MCF 10A (cell line): ENCODE measurements at regions of chr3 and their contacts with region 1.

Region 1: GRCh38 chr3:129249276-129250065 is at the start of gene COPG1:
- DNase-seq: peak; percentile 89
- H3K4me3 Mint-ChIP-seq: peak within 1 kb of the TSS; percentile 93
- H3K27ac Mint-ChIP-seq: peak within 1 kb of the TSS; percentile 98
- H3K4me1 Mint-ChIP-seq: peaks cover 27% of the 10 kb centered on the region
- H3K27me3 Mint-ChIP-seq: no peaks in the 10 kb centered on the region
- CTCF ChIP-seq: no peak
- total RNA-seq, gene COPG1: 225 and 298 TPM in 2 replicates

Region 2: DNA sequence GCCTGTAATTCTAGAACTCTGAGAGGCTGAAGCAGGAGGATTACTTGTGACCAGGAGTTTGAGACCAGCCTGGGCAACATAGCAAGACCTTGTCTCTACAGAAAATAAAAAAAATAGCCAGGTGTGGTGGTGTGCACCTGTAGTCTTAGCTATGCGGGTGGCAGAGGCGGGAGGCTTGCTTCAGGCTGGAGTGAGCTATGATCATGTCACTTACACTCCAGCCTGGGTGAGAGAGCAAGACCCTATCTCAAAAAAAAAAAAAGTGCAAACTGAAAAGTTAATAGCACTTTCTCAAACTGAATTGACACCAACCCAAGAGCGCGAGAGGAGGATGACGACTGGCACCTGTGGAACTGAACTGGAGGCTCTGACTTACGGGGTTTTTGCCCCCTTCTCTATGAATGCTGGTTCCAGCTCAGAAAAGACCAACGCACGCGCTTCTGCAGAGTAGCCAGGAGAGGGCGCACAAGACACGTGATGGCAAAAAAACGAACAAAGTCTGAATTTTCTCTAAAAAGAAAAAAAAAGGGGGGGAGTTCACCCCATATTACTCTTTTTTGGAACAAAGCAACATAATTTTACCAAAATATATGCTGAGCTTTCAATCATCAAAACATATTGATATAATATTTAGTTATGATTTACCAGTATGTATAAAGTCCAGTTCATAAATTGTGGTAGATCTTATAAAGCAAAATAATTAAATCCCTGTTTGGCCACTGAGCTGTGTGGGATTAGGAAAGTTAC is 279.3 kb before region 1 on chr3:
- CTCF ChIA-PET with region 1: interaction called, 33 read pairs
- POLR2A ChIA-PET with region 1: interaction called, 3 read pairs
- intact Hi-C with region 1: loop called (anchors 2 kb)
- DNase-seq: peak; percentile 43
- H3K4me3 Mint-ChIP-seq: no peak overlapping the region
- H3K27ac Mint-ChIP-seq: no peak overlapping the region
- H3K4me1 Mint-ChIP-seq: no peaks in the 10 kb centered on the region
- H3K27me3 Mint-ChIP-seq: no peaks in the 10 kb centered on the region
- CTCF ChIP-seq: peak; percentile 93

Region 3: GRCh38 chr3:129120254-129121004 is 129.0 kb before region 1 on chr3:
- CTCF ChIA-PET with region 1: interaction called, 7 read pairs
- POLR2A ChIA-PET with region 1: interaction called, 19 read pairs
- intact Hi-C with region 1: loop called (anchors 5 kb)
- DNase-seq: peak; percentile 98
- H3K4me3 Mint-ChIP-seq: peak overlapping the region; percentile 77
- H3K27ac Mint-ChIP-seq: peak overlapping the region; percentile 82
- H3K4me1 Mint-ChIP-seq: peaks cover 26% of the 10 kb centered on the region
- H3K27me3 Mint-ChIP-seq: no peaks in the 10 kb centered on the region
- CTCF ChIP-seq: no peak

Region 4: DNA sequence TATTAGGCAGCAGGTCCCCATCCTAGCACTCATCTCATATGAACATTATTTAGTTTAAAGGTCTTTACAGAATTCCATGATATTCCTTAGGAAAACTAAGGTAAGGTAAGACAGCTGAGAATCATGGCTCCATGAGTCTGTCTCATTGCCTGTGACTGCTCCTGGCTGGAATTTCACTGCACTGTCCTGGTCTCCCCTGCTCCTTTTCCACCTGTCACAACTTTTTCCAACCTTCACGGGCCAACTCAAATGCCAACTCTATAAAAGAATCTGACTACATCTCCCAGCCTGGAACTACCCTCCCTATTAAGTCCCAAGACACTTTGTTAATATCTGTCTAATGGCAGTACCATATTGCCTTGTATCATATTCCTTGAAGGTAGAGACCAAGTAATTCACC is 73.4 kb before region 1 on chr3:
- CTCF ChIA-PET with region 1: interaction called, 78 read pairs
- POLR2A ChIA-PET with region 1: interaction called, 217 read pairs
- intact Hi-C with region 1: no loop called
- DNase-seq: no peak
- H3K4me3 Mint-ChIP-seq: no peak overlapping the region
- H3K27ac Mint-ChIP-seq: no peak overlapping the region
- H3K4me1 Mint-ChIP-seq: peaks cover 28% of the 10 kb centered on the region
- H3K27me3 Mint-ChIP-seq: no peaks in the 10 kb centered on the region
- CTCF ChIP-seq: no peak

Region 5: DNA sequence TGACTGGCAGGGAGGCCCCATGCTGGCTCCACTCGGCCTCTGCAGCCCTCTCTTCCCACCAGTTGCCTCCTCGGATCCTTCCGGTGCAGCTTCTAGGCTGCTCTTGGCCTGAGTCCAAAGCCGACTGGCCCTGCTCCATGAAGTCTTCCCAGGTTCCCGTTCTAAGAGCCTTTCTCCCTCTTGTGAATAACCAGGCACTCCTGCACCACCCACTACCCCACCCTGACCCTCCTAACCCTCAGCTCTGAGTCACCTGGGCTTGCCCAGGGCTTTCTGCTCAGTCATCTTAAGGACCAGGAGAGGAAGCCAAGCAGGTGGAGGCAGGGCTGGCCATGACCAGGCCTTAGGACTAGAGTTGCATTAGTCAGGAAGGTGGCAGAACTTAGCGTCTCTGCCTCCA is 37.7 kb before region 1 on chr3:
- CTCF ChIA-PET with region 1: interaction called, 11 read pairs
- POLR2A ChIA-PET with region 1: interaction called, 9 read pairs
- intact Hi-C with region 1: loop called (anchors 1 kb)
- DNase-seq: peak; percentile 98
- H3K4me3 Mint-ChIP-seq: peak overlapping the region; percentile 12
- H3K27ac Mint-ChIP-seq: peak overlapping the region; percentile 63
- H3K4me1 Mint-ChIP-seq: peaks cover 12% of the 10 kb centered on the region
- H3K27me3 Mint-ChIP-seq: no peaks in the 10 kb centered on the region
- CTCF ChIP-seq: no peak

Region 6: GRCh38 chr3:129238945-129239706 is 10.3 kb before region 1 on chr3:
- CTCF ChIA-PET with region 1: interaction called, 17 read pairs
- POLR2A ChIA-PET with region 1: interaction called, 29 read pairs
- intact Hi-C with region 1: no loop called
- DNase-seq: peak; percentile 77
- H3K4me3 Mint-ChIP-seq: peak overlapping the region; percentile 54
- H3K27ac Mint-ChIP-seq: peak overlapping the region; percentile 96
- H3K4me1 Mint-ChIP-seq: peaks cover 19% of the 10 kb centered on the region
- H3K27me3 Mint-ChIP-seq: no peaks in the 10 kb centered on the region
- CTCF ChIP-seq: no peak

Region 7: DNA sequence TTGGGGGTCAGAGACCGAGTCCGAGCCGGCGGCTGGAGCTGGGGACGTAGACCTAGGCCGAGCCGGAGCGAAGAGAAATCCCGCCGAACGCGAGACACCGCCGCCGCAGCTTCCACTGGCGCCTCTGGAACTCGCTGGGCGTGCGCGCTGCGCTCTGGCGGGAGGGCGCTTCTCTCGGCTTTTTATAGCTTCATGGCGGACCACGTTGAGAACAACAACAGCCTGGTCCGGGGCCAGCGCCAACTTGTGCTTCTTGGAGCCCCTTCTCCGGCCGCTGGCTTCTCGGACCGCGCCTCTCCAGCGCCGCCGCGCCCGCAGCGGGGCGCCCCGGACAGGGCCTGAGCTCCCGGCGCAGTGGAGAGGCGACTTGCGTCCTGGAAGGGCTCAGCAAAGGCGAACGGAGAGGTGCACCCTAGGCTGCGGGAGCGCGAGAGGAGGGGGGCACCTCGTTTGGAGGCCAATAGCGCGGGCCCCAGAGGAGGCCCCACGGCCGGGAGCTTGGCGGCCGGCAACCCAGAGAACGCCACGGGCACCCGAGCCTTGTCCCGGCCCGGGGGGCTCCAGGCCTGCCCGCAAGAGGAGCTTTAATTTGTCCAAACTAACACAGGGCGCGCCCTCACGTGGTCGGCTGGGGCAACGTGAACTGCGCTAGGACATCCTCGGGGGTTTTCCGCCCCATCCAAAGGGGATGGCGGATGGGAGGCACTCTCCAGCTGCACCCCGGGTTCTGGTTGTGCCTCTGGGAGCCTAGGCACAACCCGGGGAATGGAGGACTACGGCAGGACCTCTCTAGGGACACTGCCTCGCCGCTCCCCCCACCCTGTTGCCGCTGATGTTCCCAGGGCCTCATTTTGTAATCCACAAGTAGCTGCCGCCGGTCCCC is 66.9 kb after region 1 on chr3:
- CTCF ChIA-PET with region 1: interaction called, 10 read pairs
- POLR2A ChIA-PET with region 1: interaction called, 23 read pairs
- intact Hi-C with region 1: no loop called
- DNase-seq: peak; percentile 82
- H3K4me3 Mint-ChIP-seq: peak overlapping the region; percentile 81
- H3K27ac Mint-ChIP-seq: peak overlapping the region; percentile 87
- H3K4me1 Mint-ChIP-seq: peaks cover 6% of the 10 kb centered on the region
- H3K27me3 Mint-ChIP-seq: no peaks in the 10 kb centered on the region
- CTCF ChIP-seq: peak; percentile 49